ENCODE measurements at regions of chr18 and their contacts with region 1.

Region 1: GRCh38 chr18:50203801-50204604 is 9.1 kb upstream of the MYO5B start:
- DNase-seq: peak; percentile 21
- H3K4me3 Mint-ChIP-seq: no peak overlapping the region
- H3K27ac Mint-ChIP-seq: no peak overlapping the region
- H3K4me1 Mint-ChIP-seq: peaks cover 9% of the 10 kb centered on the region
- H3K27me3 Mint-ChIP-seq: peaks cover 33% of the 10 kb centered on the region

Region 2: DNA sequence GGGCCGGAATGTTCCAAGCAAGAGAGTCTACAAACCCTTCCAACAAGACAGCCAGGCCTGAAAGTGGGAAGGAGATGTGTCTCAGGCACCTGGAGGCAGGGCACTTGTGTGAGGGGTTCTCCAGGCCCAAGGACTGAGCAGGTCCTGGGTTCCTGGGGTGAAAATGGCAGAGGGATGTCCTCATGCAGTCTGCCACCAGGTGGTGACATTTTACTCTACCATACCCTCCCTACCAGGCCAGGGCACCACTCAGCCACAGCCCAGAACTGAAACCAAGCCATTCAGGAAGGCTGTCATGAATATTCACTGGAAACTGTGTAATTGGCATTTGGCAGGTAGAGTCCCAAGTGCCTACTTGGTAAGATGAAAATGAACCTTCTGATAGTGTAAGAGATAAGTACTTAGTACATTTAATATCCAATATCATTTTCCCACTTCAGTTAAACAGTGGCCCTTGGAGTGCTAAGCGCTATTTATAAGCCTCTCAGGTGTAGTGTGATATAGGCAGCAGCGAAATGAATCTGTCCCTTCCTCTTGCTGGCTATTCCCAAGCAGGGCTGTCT is 194.1 kb before region 1 on chr18:
- CTCF ChIA-PET with region 1: interaction called, 3 read pairs
- POLR2A ChIA-PET with region 1: no interaction called
- intact Hi-C with region 1: loop called (anchors 5 kb)
- DNase-seq: peak; percentile 56
- H3K4me3 Mint-ChIP-seq: no peak overlapping the region
- H3K27ac Mint-ChIP-seq: no peak overlapping the region
- H3K4me1 Mint-ChIP-seq: no peaks in the 10 kb centered on the region
- H3K27me3 Mint-ChIP-seq: no peaks in the 10 kb centered on the region

Region 3: GRCh38 chr18:50307738-50308470 is 103.9 kb after region 1 on chr18:
- CTCF ChIA-PET with region 1: no interaction called
- POLR2A ChIA-PET with region 1: no interaction called
- intact Hi-C with region 1: no loop called
- DNase-seq: peak; percentile 93
- H3K4me3 Mint-ChIP-seq: peak overlapping the region; percentile 83
- H3K27ac Mint-ChIP-seq: no peak overlapping the region
- H3K4me1 Mint-ChIP-seq: peaks cover 4% of the 10 kb centered on the region
- H3K27me3 Mint-ChIP-seq: peaks cover 7% of the 10 kb centered on the region

Region 4: DNA sequence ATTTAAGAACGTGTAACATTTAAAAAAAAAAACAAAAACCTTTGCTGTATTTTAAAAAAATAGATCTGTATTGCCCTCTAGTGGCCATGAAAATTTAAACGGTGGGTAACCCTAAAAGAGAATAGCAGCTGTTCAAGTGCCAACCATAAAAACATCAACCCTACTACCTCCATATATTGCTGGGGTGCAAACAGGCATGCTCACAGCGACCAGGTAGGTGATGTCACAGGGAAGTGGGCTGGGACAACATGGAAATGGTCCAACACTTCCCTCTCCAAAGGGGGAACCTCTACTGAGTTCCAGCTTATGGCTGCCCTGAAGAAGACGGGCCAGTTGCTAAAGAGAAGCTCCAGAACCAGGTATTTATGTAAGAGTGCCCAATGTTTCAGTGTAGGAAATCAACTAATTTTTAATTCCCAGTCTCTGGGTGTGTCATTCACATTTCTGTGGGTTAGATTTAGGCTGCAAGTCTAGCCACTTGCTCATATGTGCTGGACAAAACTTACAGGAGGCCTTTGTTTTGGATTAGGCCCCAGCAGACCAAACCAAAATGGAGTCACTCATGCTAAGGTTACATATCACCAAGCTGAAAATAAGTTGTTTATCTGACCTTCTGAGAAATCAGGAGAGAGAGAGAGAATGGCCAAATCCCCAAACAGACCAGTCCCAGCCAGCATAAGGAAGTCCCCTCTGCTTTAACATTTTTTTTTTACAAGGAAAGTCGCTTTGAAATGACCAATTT is 225.4 kb after region 1 on chr18:
- CTCF ChIA-PET with region 1: no interaction called
- POLR2A ChIA-PET with region 1: no interaction called
- intact Hi-C with region 1: loop called (anchors 5 kb)
- DNase-seq: no peak
- H3K4me3 Mint-ChIP-seq: no peak overlapping the region
- H3K27ac Mint-ChIP-seq: no peak overlapping the region
- H3K4me1 Mint-ChIP-seq: no peaks in the 10 kb centered on the region
- H3K27me3 Mint-ChIP-seq: peaks cover 14% of the 10 kb centered on the region

Measured in activated CD4-positive, alpha-beta memory T cell treated with anti-CD3 and anti-CD28 coated beads for 36 hours (primary cell).